Astrocyte of the cerebellum (primary cell): ENCODE measurements at regions of chr1 and their contacts with region 1.

Region 1: DNA sequence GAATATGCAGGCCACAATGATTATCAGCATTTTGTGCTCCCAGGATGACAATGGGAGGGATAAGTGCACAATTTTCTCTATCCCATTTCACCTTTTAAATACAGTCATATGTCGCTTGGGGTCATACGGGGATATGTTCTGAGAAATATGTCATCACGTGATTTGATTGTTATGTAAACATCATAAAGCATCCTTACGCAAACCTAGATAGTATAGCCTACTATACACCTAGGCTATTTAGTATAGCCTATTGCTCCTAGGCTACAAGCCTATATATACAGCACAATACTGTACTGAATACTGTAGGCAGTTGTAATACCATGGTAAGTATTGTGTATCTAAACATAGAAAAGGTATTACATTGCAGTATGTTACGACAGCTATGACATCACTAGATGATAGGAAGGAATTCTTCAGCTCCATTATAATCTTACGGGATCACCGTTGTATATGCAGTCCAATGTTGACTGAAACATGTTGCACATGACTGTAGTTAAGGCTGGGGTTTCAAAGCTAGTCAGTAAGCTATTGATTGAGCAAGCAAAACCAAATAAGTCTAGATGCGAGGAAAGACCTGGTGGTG is 18.9 kb downstream of the RUSC1 start:
- DNase-seq: no peak
- H3K4me3 ChIP-seq: no peak overlapping the region
- CTCF ChIP-seq: no peak

Region 2: GRCh38 chr1:155127105-155127964 is 212.3 kb before region 1 on chr1 and contains the start of gene EFNA1:
- in situ Hi-C with region 1: no loop called
- DNase-seq: no peak
- H3K4me3 ChIP-seq: peak within 1 kb of the TSS; percentile 46
- CTCF ChIP-seq: no peak

Region 3: GRCh38 chr1:155410931-155411330 is 71.3 kb after region 1 on chr1:
- in situ Hi-C with region 1: loop called (anchors 5 kb)
- DNase-seq: no peak
- H3K4me3 ChIP-seq: no peak overlapping the region
- CTCF ChIP-seq: no peak